ENCODE measurements at regions of chr16 and their contacts with region 1.

Region 1: DNA sequence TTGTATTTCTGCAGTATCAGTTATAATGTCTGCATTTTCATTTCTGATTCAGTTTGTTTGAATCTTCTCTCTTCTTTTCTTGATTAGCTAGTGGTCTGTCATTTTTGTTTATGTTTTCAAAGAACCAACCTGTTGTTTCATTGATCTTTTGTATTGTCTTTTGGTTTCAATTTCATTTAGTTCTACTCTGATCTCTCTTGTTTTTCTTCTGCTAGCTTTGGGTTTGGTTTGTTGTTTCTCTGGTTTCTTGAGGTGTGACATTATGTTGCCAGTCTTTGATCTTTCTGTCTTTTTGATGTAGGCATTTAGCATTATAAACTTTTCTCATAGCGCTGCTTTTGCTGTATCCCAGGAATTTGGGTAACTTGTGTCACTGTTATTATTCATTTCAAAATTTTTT is 107.2 kb downstream of the PHKB start:
- DNase-seq: no peak
- H3K4me3 Mint-ChIP-seq: peak overlapping the region; percentile 52
- H3K27ac Mint-ChIP-seq: peak overlapping the region; percentile 86
- H3K4me1 Mint-ChIP-seq: peaks cover 51% of the 10 kb centered on the region
- H3K27me3 Mint-ChIP-seq: no peaks in the 10 kb centered on the region

Region 2: DNA sequence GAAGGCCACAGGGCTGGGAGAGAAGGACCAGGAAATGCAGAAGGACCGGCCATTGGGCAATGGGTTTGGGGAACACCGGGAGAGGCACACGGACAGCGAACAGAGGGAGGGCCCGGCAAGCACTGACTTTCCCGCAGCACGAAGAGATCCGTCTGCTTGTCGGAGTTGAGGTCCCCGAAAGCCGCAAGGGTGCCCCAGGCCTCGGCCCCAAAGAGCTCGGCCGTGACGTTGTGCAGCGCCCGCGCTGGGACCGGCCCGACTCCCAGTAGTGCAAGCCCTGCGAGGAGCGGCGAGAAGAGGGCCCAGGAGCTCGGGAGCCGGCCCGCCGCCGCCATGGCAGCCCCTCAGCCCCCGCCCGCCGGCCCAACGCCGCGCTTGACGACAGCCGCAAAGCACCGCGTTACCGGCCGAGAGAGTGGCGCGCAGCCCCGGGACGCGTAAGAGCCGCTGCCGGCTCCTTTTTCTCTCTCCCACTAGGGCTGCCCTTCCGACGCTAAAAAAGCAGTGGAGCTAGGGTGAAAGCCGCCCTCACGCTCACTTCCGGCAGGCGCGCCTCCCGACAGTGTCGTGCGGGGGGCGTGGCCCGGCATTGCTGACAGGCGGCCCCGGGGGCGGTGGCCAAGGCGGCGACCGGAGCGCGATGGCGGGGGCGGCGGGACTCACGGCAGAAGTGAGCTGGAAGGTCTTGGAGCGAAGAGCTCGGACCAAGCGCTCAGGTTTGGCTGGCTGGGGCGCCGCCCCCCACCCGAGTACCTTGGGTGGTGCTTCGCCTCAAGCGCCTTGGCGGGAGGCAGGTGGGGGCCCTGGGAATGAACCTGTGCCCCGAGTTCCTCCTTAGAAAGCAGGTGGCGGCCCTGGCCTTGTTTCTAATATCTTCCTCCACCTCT is 107.4 kb before region 1 on chr16 and contains the starts of genes ITFG1 and PHKB:
- CTCF ChIA-PET with region 1: no interaction called
- POLR2A ChIA-PET with region 1: interaction called, 13 read pairs
- DNase-seq: peak; percentile 96
- H3K4me3 Mint-ChIP-seq: peak within 1 kb of the TSS; percentile 95
- H3K27ac Mint-ChIP-seq: peak within 1 kb of the TSS; percentile 93
- H3K4me1 Mint-ChIP-seq: peaks cover 52% of the 10 kb centered on the region
- H3K27me3 Mint-ChIP-seq: no peaks in the 10 kb centered on the region
- total RNA-seq, gene ITFG1: 27.9 to 28.8 TPM
- total RNA-seq, gene PHKB: 33.2 to 36.3 TPM

Region 3: GRCh38 chr16:47592232-47592631 is 23.9 kb after region 1 on chr16:
- CTCF ChIA-PET with region 1: no interaction called
- POLR2A ChIA-PET with region 1: no interaction called
- DNase-seq: no peak
- H3K4me3 Mint-ChIP-seq: no peak overlapping the region
- H3K27ac Mint-ChIP-seq: no peak overlapping the region
- H3K4me1 Mint-ChIP-seq: peaks cover 2% of the 10 kb centered on the region
- H3K27me3 Mint-ChIP-seq: no peaks in the 10 kb centered on the region

Measured in activated CD4-positive, alpha-beta memory T cell treated with anti-CD3 and anti-CD28 coated beads, Interleukin-2, amount 10 ng/mL, durations not matched to agents 7 days and 5 days (primary cell).